Heart right ventricle (tissue), 16 donors: ENCODE measurements at regions of chr19 and their contacts with region 1.

Region 1: GRCh38 chr19:44653977-44654774 is 10.5 kb downstream of the PVR start:
- DNase-seq: peak; percentile 71 to 72
- ATAC-seq: peak; percentile 59 to 84 (median 74)
- H3K4me3 ChIP-seq: no peak overlapping the region
- H3K27ac ChIP-seq: no peak overlapping the region
- H3K4me1 ChIP-seq: peaks cover 0 to 27% (median 8%) of the 10 kb centered on the region in 9 donors
- H3K27me3 ChIP-seq: no peaks in the 10 kb centered on the region
- CTCF ChIP-seq: peak; percentile 39 to 77 (median 68)

Region 2: GRCh38 chr19:44570984-44571684 is 83.0 kb before region 1 on chr19:
- intact Hi-C with region 1: loop called (anchors 1 to 5 kb)
- DNase-seq: peak in 1 of 2 donors; percentile 80
- ATAC-seq: peak in 7 of 8 donors; percentile 55 to 84 (median 78)
- H3K4me3 ChIP-seq: no peak overlapping the region
- H3K27ac ChIP-seq: no peak overlapping the region
- H3K4me1 ChIP-seq: peaks cover 0 to 11% (median 0%) of the 10 kb centered on the region in 9 donors
- H3K27me3 ChIP-seq: peaks cover 0 to 23% (median 0%) of the 10 kb centered on the region in 7 donors
- CTCF ChIP-seq: peak; percentile 51 to 86 (median 83)

Region 3: DNA sequence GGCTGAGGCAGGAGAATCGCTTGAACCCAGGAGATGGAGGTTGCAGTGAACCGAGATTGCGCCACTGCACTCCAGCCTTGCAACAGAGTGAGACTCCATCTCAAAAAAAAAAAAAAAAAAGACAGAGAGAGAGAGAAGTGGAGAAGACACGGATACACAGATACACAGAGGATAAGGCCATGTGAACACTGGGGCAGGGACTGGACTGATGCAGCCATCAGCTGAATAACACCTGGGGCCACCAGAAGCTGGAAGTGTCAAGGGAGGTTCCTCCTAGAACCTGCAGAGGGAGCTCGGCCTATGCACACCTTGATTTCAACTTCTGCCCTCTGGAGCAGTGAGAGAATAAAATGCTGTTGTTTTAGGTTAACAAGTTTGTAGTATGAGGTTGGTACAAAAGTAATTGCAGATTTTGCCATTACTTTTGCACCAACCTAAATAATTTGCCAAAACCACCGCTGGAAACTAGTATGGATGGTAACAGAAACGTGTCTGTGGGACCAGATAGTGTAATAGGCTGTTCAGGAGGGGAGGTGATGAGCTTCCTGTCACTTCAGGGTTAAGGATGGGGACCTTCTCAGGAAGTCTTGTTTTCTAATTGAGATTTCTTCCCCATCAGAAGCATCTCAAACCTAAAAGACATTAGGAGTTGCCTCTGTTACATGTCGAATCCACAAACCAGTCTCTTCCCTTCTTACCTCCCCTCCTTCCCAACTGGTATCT is 77.2 kb before region 1 on chr19:
- intact Hi-C with region 1: loop called in 5 of 10 experiments (anchors 2 to 5 kb)
- DNase-seq: no peak
- ATAC-seq: peak in 4 of 8 donors; percentile 56 to 72 (median 62)
- H3K4me3 ChIP-seq: no peak overlapping the region
- H3K27ac ChIP-seq: no peak overlapping the region
- H3K4me1 ChIP-seq: peaks cover 0 to 4% (median 0%) of the 10 kb centered on the region in 9 donors
- H3K27me3 ChIP-seq: peaks cover 0 to 3% (median 0%) of the 10 kb centered on the region in 7 donors
- CTCF ChIP-seq: peak; percentile 37 to 72 (median 60)

Region 4: GRCh38 chr19:44582581-44583265 is 71.5 kb before region 1 on chr19:
- intact Hi-C with region 1: loop called in 3 of 10 experiments (anchors 5 kb)
- DNase-seq: peak in 1 of 2 donors; percentile 31
- ATAC-seq: peak in 1 of 8 donors; percentile 37
- H3K4me3 ChIP-seq: no peak overlapping the region
- H3K27ac ChIP-seq: no peak overlapping the region
- H3K4me1 ChIP-seq: peaks cover 0 to 6% (median 0%) of the 10 kb centered on the region in 9 donors
- H3K27me3 ChIP-seq: peaks cover 0 to 3% (median 0%) of the 10 kb centered on the region in 7 donors
- CTCF ChIP-seq: peak; percentile 17 to 64 (median 55)

Region 5: GRCh38 chr19:44587963-44588770 is 66.0 kb before region 1 on chr19:
- intact Hi-C with region 1: loop called in 3 of 10 experiments (anchors 5 kb)
- DNase-seq: no peak
- ATAC-seq: peak in 3 of 8 donors; percentile 31 to 55 (median 32)
- H3K4me3 ChIP-seq: no peak overlapping the region
- H3K27ac ChIP-seq: peak overlapping the region in 6 of 10 donors; percentile 9 to 59 (median 30)
- H3K4me1 ChIP-seq: peaks cover 0 to 30% (median 4%) of the 10 kb centered on the region in 9 donors
- H3K27me3 ChIP-seq: no peaks in the 10 kb centered on the region
- CTCF ChIP-seq: peak in 5 of 9 donors; percentile 13 to 45 (median 32)

Region 6: DNA sequence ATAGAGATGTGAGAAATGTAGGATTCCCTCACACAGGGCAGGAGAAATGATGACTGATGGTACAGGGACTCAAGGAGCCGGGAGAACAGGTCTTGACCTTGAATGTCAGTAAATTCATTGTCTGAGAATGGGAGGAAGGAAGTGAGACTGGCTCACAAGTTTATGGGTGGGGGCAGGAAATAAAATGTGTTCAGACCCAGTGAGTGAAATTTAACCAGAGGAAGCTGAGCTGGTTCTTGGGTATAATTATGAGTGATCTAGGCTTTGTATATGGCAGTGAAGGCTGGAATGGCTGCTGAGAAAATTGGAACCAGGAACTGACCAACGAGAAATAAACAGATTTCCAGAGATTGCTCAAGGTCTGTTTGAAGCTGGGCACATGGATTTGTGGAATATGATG is 47.1 kb before region 1 on chr19:
- intact Hi-C with region 1: loop called in 1 of 10 experiments (anchors 5 kb)
- DNase-seq: peak in 1 of 2 donors; percentile 50
- ATAC-seq: peak; percentile 71 to 87 (median 86)
- H3K4me3 ChIP-seq: no peak overlapping the region
- H3K27ac ChIP-seq: peak overlapping the region; percentile 20 to 84 (median 64)
- H3K4me1 ChIP-seq: peaks cover 0 to 48% (median 26%) of the 10 kb centered on the region in 9 donors
- H3K27me3 ChIP-seq: peaks cover 0 to 2% (median 0%) of the 10 kb centered on the region in 7 donors
- CTCF ChIP-seq: no peak

Region 7: DNA sequence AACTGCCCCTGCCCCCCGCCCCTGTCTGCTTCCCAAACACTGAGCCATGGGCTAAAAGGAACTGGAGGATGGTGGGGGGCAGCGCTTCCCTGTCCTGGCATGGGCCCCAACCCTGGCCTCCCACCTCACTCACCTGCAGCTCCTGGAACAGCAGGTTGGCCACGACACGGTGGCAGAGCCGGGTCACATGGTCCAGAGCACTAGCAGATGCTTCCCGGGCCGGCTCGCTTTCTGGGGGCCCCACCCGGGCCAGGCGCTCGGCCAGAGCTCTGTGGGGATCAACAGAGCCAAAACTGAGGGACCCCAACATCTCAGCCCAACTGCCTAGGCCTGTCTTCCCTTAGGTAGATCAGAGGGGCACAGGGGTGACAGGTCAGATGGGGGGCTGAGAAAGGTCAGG is 570.5 kb after region 1 on chr19:
- intact Hi-C with region 1: no loop called
- DNase-seq: no peak
- ATAC-seq: peak in 1 of 8 donors; percentile 30
- H3K4me3 ChIP-seq: no peak overlapping the region
- H3K27ac ChIP-seq: no peak overlapping the region
- H3K4me1 ChIP-seq: peaks cover 0 to under 1% (median 0%) of the 10 kb centered on the region in 9 donors
- H3K27me3 ChIP-seq: peaks cover 0 to 11% (median 0%) of the 10 kb centered on the region in 7 donors
- CTCF ChIP-seq: no peak